Activated CD4-positive, alpha-beta T cell treated with anti-CD3 and anti-CD28 coated beads, Interleukin-2, amount 10 ng/mL, durations not matched to agents 24 days and 14 days (primary cell): ENCODE measurements at regions of chr10 and their contacts with region 1.

Region 1: GRCh38 chr10:46030091-46030937 is at the start of gene NCOA4:
- DNase-seq: peak; percentile 99
- H3K4me3 Mint-ChIP-seq: peak within 1 kb of the TSS; percentile 98
- H3K27ac Mint-ChIP-seq: peak within 1 kb of the TSS; percentile 97
- H3K4me1 Mint-ChIP-seq: peaks cover 42% of the 10 kb centered on the region
- H3K27me3 Mint-ChIP-seq: peaks cover 1% of the 10 kb centered on the region
- total RNA-seq, gene NCOA4: 95.2 and 98.2 TPM in 2 replicates

Region 2: DNA sequence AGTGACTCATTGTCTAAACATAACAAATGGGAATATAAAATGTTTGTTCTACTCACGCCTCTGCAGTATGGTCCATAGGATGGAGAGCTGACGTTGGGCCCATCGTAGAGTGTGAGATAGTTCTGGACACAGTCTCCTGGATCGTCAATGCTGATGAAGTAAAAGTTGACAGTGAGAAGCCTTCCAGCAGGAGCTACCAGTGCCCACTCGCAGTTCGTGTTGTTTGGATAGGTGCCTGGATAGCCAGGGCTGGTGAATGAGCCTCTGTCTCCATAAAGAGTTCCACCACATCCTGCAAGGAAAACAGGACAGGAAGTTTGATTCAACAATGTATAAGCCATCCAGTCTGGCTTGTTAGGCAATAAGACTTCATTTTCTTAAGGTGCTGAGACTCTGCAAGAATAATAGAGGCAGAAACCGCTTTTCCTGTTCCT is 794.5 kb before region 1 on chr10:
- intact Hi-C with region 1: loop called (anchors 5 kb)
- DNase-seq: no peak
- H3K4me3 Mint-ChIP-seq: no peak overlapping the region
- H3K27ac Mint-ChIP-seq: no peak overlapping the region
- H3K4me1 Mint-ChIP-seq: peaks cover 12% of the 10 kb centered on the region
- H3K27me3 Mint-ChIP-seq: peaks cover 13% of the 10 kb centered on the region

Region 3: DNA sequence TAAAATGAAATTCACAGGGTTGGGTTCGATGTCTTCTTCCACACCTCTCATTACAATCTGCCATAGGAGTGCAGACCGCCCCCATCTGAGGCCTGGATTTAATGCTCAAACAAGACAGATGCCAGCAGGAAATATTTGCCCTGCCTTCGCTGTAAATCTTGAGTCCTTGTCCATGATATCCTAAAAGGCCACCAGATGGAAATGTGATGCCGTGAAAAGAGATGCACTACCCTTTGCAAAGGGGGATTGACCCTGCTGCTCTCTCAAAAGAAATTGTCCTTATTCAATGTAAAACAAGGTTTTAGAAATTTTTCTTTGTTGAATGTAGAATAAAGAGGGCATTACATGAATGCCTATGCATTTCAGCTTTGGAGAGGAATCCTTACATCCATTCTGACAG is 220.5 kb before region 1 on chr10:
- intact Hi-C with region 1: no loop called
- DNase-seq: peak; percentile 44
- H3K4me3 Mint-ChIP-seq: no peak overlapping the region
- H3K27ac Mint-ChIP-seq: no peak overlapping the region
- H3K4me1 Mint-ChIP-seq: no peaks in the 10 kb centered on the region
- H3K27me3 Mint-ChIP-seq: peaks cover 4% of the 10 kb centered on the region

Region 4: DNA sequence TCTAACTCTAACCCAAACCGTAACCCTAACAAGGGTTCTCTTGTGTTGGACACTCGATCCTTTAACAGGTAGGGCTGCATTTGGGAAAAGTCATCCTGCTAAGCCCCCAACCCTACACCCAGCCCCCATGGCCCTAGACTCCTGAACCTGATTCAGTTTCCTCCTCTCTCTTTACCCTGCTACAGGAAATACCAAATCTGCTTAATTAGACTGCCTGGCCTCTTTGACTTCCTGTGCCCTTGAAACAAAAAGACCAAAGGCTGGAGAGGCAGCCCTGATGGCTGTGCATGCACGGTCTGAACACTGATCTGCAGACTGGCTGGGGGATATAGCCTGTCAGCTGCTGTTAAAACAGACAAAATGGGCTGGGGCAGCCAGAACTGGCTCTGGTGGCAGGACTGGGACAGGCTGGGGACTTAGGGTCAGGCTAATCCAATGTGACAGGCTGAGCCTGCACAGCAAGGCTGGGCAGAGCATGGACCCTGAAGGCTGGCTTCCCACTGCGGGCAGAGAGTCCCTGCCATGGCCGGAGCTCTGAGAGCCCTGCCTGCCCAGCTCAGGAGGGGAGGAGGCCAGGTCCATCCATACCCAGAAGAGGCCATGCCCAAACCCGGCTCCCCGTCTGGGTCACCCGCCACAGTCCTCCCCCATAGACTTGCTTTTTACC is 66.7 kb after region 1 on chr10:
- intact Hi-C with region 1: loop called (anchors 2 kb)
- DNase-seq: peak; percentile 72
- H3K4me3 Mint-ChIP-seq: peak overlapping the region; percentile 54
- H3K27ac Mint-ChIP-seq: peak overlapping the region; percentile 69
- H3K4me1 Mint-ChIP-seq: peaks cover 24% of the 10 kb centered on the region
- H3K27me3 Mint-ChIP-seq: peaks cover 6% of the 10 kb centered on the region

Region 5: GRCh38 chr10:46268076-46268881 is 238.0 kb after region 1 on chr10:
- intact Hi-C with region 1: loop called (anchors 10 kb)
- DNase-seq: peak; percentile 77
- H3K4me3 Mint-ChIP-seq: no peak overlapping the region
- H3K27ac Mint-ChIP-seq: no peak overlapping the region
- H3K4me1 Mint-ChIP-seq: peaks cover 31% of the 10 kb centered on the region
- H3K27me3 Mint-ChIP-seq: no peaks in the 10 kb centered on the region